Panc1 (cell line): ENCODE measurements at regions of chr2 and their contacts with region 1.

Region 1: GRCh38 chr2:65103013-65103715 is 26.7 kb downstream of the RAB1A start:
- DNase-seq: no peak
- ATAC-seq: no peak
- H3K4me3 ChIP-seq: no peak overlapping the region
- H3K27ac ChIP-seq: no peak overlapping the region
- H3K4me1 ChIP-seq: no peaks in the 10 kb centered on the region
- H3K27me3 ChIP-seq: no peaks in the 10 kb centered on the region
- CTCF ChIP-seq: no peak

Region 2: GRCh38 chr2:64779117-64779690 is 324.0 kb before region 1 on chr2:
- CTCF ChIA-PET with region 1: no interaction called
- POLR2A ChIA-PET with region 1: no interaction called
- in situ Hi-C with region 1: no loop called
- intact Hi-C with region 1: no loop called
- DNase-seq: no peak
- ATAC-seq: peak; percentile 80
- H3K4me3 ChIP-seq: no peak overlapping the region
- H3K27ac ChIP-seq: 0 out of 2 replicates have a peak overlapping the region, but pooled peaks have one; percentile 9
- H3K4me1 ChIP-seq: peaks cover 6% of the 10 kb centered on the region; the same call in 1 of the 2 replicates
- H3K27me3 ChIP-seq: no peaks in the 10 kb centered on the region
- CTCF ChIP-seq: no peak

Region 3: GRCh38 chr2:64839844-64840243 is 263.3 kb before region 1 on chr2:
- CTCF ChIA-PET with region 1: no interaction called
- POLR2A ChIA-PET with region 1: no interaction called
- in situ Hi-C with region 1: no loop called
- intact Hi-C with region 1: no loop called
- DNase-seq: no peak
- ATAC-seq: no peak
- H3K4me3 ChIP-seq: no peak overlapping the region
- H3K27ac ChIP-seq: no peak overlapping the region
- H3K4me1 ChIP-seq: peaks cover 9% of the 10 kb centered on the region
- H3K27me3 ChIP-seq: no peaks in the 10 kb centered on the region
- CTCF ChIP-seq: no peak

Region 4: DNA sequence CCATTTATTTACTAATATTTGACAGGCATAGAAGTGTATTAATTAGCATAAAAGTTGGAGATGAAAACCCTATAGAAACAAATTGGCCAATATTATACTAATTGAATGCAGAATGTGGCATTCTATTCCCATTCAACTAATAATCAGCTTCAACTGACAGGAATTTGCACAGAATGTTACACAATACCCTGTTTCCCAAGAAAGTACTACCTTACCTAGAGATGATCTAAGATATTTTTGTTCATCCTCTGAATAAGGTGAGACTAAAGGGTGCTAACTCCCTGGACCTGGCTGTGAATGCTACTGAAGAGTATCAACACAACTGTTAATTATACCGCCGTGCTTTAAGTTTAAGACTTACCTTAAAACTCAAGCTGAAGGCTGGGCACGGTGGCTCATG is 18.0 kb before region 1 on chr2:
- CTCF ChIA-PET with region 1: no interaction called
- POLR2A ChIA-PET with region 1: interaction called, 18 read pairs
- in situ Hi-C with region 1: no loop called
- intact Hi-C with region 1: no loop called
- DNase-seq: no peak
- ATAC-seq: no peak
- H3K4me3 ChIP-seq: no peak overlapping the region
- H3K27ac ChIP-seq: no peak overlapping the region
- H3K4me1 ChIP-seq: no peaks in the 10 kb centered on the region
- H3K27me3 ChIP-seq: no peaks in the 10 kb centered on the region
- CTCF ChIP-seq: no peak

Region 5: GRCh38 chr2:65514555-65515195 is 411.5 kb after region 1 on chr2:
- CTCF ChIA-PET with region 1: no interaction called
- POLR2A ChIA-PET with region 1: no interaction called
- in situ Hi-C with region 1: no loop called
- intact Hi-C with region 1: no loop called
- DNase-seq: no peak
- ATAC-seq: no peak
- H3K4me3 ChIP-seq: no peak overlapping the region
- H3K27ac ChIP-seq: no peak overlapping the region
- H3K4me1 ChIP-seq: no peaks in the 10 kb centered on the region
- H3K27me3 ChIP-seq: no peaks in the 10 kb centered on the region
- CTCF ChIP-seq: no peak